Esophagus muscularis mucosa (tissue), 4 donors: ENCODE measurements at regions of chr18 and their contacts with region 1.

Region 1: DNA sequence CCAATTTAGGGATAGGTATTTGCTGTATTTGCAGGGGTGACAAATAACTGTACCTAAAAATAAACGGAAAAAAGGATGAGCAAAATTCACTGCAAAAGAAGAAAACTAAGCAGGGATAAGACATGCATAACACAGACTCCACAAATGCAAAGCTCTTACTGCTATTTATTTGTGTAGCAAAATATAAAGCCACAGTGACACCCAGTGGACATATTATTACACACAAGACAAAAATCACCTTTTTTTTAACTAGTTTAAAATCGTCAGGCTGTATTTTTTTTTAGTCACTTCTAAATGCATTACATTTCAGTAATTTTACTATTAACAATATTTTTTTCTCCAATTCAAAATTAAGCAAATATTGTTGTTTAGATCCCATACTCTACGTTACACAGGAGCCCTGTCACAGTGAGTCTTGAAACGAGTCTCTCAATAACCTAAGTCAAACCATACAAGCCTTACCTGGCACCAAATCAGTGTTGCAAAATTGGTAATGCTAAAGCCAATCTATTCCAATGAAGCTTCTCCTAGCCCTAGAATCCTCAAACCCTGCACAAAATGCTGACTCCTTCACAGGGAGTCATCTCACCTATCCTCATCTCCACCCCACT is 23.7 kb downstream of the METTL4 start:
- DNase-seq: no peak
- H3K4me3 ChIP-seq: no peak overlapping the region
- H3K27ac ChIP-seq: no peak overlapping the region
- H3K4me1 ChIP-seq: peaks cover 0 to 6% (median 0%) of the 10 kb centered on the region in 4 donors
- H3K27me3 ChIP-seq: no peaks in the 10 kb centered on the region
- CTCF ChIP-seq: peak; percentile 37 to 59 (median 53)
- EP300 ChIP-seq: no peak
- POLR2A ChIP-seq: no peak

Region 2: DNA sequence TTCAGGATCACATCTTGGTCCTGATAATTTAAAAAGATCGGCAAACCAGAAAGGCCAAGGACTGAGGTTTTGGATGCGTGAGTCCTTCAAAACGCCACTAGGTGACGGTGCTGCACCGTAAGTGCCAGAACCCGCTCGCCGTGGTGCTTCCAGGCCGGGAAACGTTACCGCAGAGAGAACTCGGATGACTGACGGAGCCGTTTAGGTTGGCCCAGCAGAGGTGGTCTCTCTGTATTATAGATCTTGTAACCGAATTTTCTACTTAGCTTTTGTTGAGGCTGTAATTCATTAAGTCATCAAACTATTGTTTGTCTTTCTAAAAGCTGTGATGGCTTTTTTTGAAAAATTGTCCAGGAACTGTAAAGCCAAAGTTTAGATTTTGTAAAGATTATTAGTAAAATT is 1682.7 kb before region 1 on chr18:
- intact Hi-C with region 1: loop called (anchors 10 kb)
- DNase-seq: no peak
- H3K4me3 ChIP-seq: no peak overlapping the region
- H3K27ac ChIP-seq: no peak overlapping the region
- H3K4me1 ChIP-seq: no peaks in the 10 kb centered on the region
- H3K27me3 ChIP-seq: peaks cover 0 to 27% (median 0%) of the 10 kb centered on the region in 4 donors
- CTCF ChIP-seq: peak; percentile 81 to 99 (median 90)
- EP300 ChIP-seq: no peak
- POLR2A ChIP-seq: no peak

Region 3: DNA sequence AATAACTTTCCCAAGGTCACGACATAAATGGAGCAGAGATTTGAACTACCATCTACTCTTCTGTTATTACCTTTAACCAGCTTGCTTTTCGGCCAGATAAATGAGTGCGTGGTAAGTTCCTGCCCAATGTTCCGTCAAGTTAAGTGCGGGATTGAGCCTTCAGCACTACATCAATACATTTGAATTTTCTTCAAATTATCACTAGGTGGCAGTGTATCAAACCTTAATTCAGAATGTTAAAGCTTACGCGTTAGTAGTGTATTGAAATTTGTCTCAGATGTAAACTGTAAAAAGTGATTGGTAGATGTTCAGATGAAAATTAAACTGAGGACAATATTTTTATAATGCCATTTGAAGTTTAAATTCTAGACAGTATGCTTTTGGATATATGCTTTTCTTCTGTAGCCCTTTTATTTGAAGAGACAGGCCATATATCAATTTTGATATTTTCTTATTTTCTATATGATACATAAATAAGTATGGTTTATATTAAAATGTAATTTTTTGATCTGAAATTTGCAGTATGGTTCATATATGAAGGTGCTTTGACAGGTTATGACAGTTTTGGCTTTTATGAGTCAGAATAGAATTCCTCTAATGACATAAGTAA is 961.6 kb before region 1 on chr18:
- intact Hi-C with region 1: loop called (anchors 10 kb)
- DNase-seq: no peak
- H3K4me3 ChIP-seq: no peak overlapping the region
- H3K27ac ChIP-seq: no peak overlapping the region
- H3K4me1 ChIP-seq: no peaks in the 10 kb centered on the region
- H3K27me3 ChIP-seq: peaks cover 0 to 6% (median 0%) of the 10 kb centered on the region in 4 donors
- CTCF ChIP-seq: peak; percentile 20 to 40 (median 22)
- EP300 ChIP-seq: no peak
- POLR2A ChIP-seq: no peak

Region 4: DNA sequence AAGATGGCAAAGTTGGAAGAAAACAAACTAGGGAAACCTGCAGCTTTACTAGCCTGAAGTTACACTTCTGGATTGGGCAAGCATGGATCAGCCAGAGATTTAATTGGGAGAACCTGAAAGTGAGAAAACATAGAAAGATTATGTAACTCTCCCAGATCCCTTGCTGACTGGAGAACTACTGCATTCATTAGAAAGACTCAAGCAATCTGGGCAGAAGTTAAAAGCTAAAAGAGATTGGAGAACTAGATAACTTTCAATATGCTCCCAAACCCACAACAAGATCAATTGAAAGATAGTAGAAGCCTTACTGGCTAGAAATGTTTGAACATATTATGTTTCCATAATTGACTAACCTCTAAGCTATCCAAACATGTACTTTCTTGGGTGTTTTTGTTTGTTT is 162.2 kb before region 1 on chr18:
- intact Hi-C with region 1: no loop called
- DNase-seq: no peak
- H3K4me3 ChIP-seq: no peak overlapping the region
- H3K27ac ChIP-seq: no peak overlapping the region
- H3K4me1 ChIP-seq: no peaks in the 10 kb centered on the region
- H3K27me3 ChIP-seq: no peaks in the 10 kb centered on the region
- CTCF ChIP-seq: no peak
- EP300 ChIP-seq: no peak
- POLR2A ChIP-seq: no peak

Region 5: DNA sequence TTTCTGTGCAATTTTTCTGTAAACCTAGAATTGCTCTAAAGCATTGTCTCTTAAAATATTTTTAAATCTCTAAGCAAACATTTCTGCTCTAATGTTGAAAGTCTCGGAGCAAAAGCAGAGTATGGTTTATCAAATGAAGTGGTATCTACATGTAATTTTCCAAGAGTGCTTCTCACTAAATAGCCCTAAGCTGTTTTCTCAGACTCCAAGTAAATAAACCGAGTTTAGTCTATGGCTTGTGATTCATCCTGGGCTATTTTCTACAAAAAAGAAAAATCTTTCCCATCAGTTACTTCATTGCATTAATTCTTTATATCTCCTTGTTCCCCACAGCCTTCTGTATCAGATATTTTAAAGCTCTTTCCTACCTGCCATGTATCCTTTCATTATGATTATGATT is 67.0 kb before region 1 on chr18:
- intact Hi-C with region 1: no loop called
- DNase-seq: no peak
- H3K4me3 ChIP-seq: no peak overlapping the region
- H3K27ac ChIP-seq: no peak overlapping the region
- H3K4me1 ChIP-seq: no peaks in the 10 kb centered on the region
- H3K27me3 ChIP-seq: no peaks in the 10 kb centered on the region
- CTCF ChIP-seq: no peak
- EP300 ChIP-seq: no peak
- POLR2A ChIP-seq: no peak